Activated CD4-positive, alpha-beta T cell treated with anti-CD3 and anti-CD28 coated beads, Interleukin-2, amount 10 ng/mL, durations not matched to agents 24 days and 14 days (primary cell): ENCODE measurements at regions of chr2 and their contacts with region 1.

Region 1: DNA sequence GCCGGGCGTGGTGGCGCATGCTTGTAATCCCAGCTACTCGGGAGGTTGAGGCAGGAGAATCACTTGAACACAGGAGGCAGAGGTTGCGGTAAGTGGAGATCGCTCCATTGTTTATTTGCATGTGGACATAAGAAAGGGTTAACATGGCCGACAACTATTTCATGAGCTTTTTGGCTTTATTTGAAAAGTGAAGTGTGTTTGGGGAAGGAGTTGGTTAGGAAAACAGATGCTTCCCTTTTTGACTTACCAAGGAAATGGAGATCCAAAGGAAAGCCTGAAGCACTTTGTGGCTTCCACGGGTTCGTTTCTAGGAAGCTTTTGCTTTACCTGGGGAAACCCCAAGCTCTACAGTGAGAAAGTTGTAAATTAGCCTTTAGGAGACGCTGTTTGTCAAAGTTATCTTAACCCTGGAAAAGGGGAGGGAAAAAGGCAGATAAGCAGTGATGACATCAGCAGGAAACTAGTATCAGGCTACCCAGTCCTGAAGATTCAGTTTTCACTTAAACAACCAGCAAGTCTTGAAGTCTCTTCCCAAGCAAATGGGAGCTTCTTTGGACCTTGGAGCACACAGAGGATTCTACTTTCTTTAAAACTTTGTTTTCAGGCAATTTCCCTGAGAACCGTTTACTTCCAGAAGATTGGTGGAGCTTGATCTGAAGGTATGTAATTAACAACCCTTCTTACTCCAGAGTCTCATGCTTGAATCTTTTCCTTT is at the start of gene CASP10:
- DNase-seq: peak; percentile 87
- H3K4me3 Mint-ChIP-seq: peak within 1 kb of the TSS; percentile 98
- H3K27ac Mint-ChIP-seq: peak within 1 kb of the TSS; percentile 95
- H3K4me1 Mint-ChIP-seq: peaks cover 49% of the 10 kb centered on the region
- H3K27me3 Mint-ChIP-seq: no peaks in the 10 kb centered on the region
- total RNA-seq, gene CASP10: 12.7 and 13.1 TPM in 2 replicates

Region 2: GRCh38 chr2:200963124-200963917 is 219.5 kb before region 1 on chr2 and contains the start of gene ORC2:
- intact Hi-C with region 1: loop called (anchors 2 kb)
- DNase-seq: peak; percentile 99
- H3K4me3 Mint-ChIP-seq: peak within 1 kb of the TSS; percentile 90
- H3K27ac Mint-ChIP-seq: peak within 1 kb of the TSS; percentile 96
- H3K4me1 Mint-ChIP-seq: peaks cover 45% of the 10 kb centered on the region
- H3K27me3 Mint-ChIP-seq: no peaks in the 10 kb centered on the region
- total RNA-seq, gene ORC2: 64.2 and 66.5 TPM in 2 replicates

Region 3: DNA sequence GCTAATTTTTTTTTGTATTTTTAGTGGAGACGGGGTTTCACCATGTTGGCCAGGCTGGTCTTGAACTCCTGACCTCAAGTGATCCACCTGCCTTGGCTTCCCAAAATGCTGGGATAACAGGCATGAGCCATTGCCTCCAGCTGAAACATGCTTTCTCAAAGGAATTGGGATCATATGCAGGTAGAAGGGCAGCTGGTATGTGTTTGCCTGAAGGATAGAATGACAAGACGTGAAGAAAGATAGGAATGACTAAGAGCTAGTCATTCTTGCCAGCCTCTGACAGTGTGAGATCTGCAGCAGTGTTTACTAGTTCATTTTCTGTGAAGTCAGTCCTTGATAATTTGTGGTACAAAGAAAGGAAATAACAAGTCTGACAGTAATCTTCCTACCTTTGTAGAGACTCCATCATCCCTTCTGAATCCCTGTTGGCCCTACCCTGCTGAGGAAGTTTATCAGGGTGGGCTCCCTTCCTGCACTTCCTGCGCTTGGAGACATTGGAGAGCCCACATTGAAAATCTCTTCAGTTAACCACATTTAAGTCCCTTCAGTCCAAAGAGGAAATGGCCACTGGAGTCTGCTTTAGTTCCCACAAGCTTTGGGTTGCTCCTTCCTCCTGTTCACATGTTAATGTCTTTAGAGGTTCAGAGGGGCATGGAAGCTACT is 52.2 kb before region 1 on chr2:
- intact Hi-C with region 1: loop called (anchors 1 kb)
- DNase-seq: peak; percentile 80
- H3K4me3 Mint-ChIP-seq: peak overlapping the region; percentile 81
- H3K27ac Mint-ChIP-seq: peak overlapping the region; percentile 100
- H3K4me1 Mint-ChIP-seq: peaks cover 51% of the 10 kb centered on the region
- H3K27me3 Mint-ChIP-seq: no peaks in the 10 kb centered on the region

Region 4: GRCh38 chr2:201171259-201171814 is 11.5 kb before region 1 on chr2:
- intact Hi-C with region 1: no loop called
- DNase-seq: no peak
- H3K4me3 Mint-ChIP-seq: no peak overlapping the region
- H3K27ac Mint-ChIP-seq: no peak overlapping the region
- H3K4me1 Mint-ChIP-seq: peaks cover 7% of the 10 kb centered on the region
- H3K27me3 Mint-ChIP-seq: no peaks in the 10 kb centered on the region

Region 5: GRCh38 chr2:201194097-201194496 is 11.3 kb after region 1 on chr2:
- intact Hi-C with region 1: loop called (anchors 1 kb)
- DNase-seq: peak; percentile 65
- H3K4me3 Mint-ChIP-seq: peak overlapping the region; percentile 73
- H3K27ac Mint-ChIP-seq: peak overlapping the region; percentile 52
- H3K4me1 Mint-ChIP-seq: peaks cover 44% of the 10 kb centered on the region
- H3K27me3 Mint-ChIP-seq: no peaks in the 10 kb centered on the region

Region 6: GRCh38 chr2:201208563-201209252 is 25.9 kb after region 1 on chr2:
- intact Hi-C with region 1: loop called (anchors 2 kb)
- DNase-seq: no peak
- H3K4me3 Mint-ChIP-seq: no peak overlapping the region
- H3K27ac Mint-ChIP-seq: no peak overlapping the region
- H3K4me1 Mint-ChIP-seq: peaks cover 21% of the 10 kb centered on the region
- H3K27me3 Mint-ChIP-seq: no peaks in the 10 kb centered on the region

Region 7: GRCh38 chr2:201363857-201364560 is 181.2 kb after region 1 on chr2:
- intact Hi-C with region 1: loop called (anchors 2 kb)
- DNase-seq: peak; percentile 82
- H3K4me3 Mint-ChIP-seq: no peak overlapping the region
- H3K27ac Mint-ChIP-seq: peak overlapping the region; percentile 38
- H3K4me1 Mint-ChIP-seq: peaks cover 35% of the 10 kb centered on the region
- H3K27me3 Mint-ChIP-seq: no peaks in the 10 kb centered on the region

Region 8: DNA sequence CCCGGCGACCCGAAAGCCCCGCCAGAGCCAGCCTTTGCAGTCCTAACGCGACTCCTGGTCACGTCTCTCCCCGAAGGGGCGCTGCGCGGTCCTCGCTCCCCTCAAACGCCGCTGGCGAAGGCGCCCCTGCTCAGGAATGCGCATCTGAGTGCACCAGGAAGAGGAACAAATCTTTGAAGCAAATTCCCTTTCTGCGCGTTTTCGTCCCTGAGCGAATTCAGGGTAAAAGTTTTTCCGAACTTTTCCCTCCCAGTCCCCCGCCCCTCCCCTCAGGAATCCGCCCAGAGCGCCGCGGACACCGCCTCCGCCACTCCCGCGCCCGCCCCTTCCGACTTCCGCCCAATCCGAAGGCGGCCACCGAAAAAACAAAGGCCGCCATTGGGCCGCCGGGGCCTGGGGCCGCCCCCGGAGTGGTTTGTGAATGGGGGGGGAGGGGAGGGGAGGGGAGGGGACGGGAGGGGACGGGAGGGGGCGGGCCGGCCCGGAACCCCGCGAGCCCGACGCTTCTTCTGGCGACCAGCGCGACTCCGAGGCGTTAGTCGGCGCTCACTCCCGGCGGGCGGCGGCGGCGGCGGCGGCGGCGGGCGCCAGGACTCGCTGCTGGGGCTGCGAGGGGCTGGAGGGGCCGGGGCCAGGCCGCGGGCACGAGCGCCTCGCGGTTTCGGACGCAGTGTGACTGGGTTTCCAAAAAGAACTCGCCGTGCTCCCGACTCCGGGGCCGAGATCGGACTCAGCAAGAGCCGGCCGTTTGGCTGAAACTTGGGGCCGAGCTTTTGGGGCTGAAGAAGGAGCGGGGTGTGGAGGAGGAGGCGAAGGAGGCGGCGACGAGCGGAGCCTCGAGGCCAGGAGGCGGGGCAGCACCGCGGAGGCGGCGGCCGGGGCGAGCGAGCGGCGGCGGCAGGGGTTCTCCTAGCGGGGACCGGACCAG is 850.8 kb after region 1 on chr2 and contains the start of gene FZD7:
- intact Hi-C with region 1: loop called (anchors 2 kb)
- DNase-seq: peak; percentile 96
- H3K4me3 Mint-ChIP-seq: peak within 1 kb of the TSS; percentile 85
- H3K27ac Mint-ChIP-seq: peak within 1 kb of the TSS; percentile 62
- H3K4me1 Mint-ChIP-seq: peaks cover 12% of the 10 kb centered on the region
- H3K27me3 Mint-ChIP-seq: peaks cover 42% of the 10 kb centered on the region
- total RNA-seq, gene FZD7: 1.3 TPM in 2 replicates